ENCODE measurements at regions of chr18 and their contacts with region 1.

Region 1: DNA sequence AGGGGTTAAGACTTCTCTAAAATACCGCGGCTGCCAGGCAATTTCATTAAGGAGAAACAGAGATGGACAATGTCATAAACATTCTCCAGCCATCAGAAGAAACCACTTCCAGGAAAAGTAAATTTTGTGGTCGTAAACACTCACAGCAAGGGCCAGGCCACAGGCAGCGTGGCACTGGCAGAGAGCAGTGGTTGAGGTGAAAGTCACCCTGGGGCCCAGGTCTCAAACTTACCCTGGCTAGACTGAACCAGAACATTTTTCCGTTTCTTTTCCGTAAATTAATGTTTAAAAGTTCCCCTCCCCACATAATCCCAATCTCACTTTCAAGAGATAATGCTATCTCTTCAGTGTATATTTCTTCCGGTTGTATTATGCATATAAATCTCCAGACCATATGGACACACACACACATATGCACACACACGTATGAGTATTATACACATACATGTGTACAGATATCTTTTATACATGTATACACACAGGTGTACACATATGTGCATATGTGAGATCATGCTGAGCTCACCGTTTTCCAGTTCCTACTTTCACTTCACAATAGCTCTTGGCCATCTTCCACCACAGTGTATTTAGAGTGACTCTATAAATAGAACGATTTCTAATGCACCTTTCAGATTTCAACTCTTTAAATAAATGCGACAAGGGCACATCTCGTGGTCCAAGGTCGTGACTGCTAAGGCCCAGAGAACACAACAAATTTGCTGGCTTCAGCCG is 90.1 kb downstream of the MALT1 start:
- DNase-seq: no peak
- H3K4me3 Mint-ChIP-seq: no peak overlapping the region
- H3K27ac Mint-ChIP-seq: no peak overlapping the region
- H3K4me1 Mint-ChIP-seq: no peaks in the 10 kb centered on the region
- H3K27me3 Mint-ChIP-seq: peaks cover 20% of the 10 kb centered on the region
- CTCF ChIP-seq: no peak

Region 2: GRCh38 chr18:58501066-58501896 is 260.1 kb before region 1 on chr18:
- CTCF ChIA-PET with region 1: interaction called, 19 read pairs
- POLR2A ChIA-PET with region 1: no interaction called
- intact Hi-C with region 1: no loop called
- DNase-seq: no peak
- H3K4me3 Mint-ChIP-seq: no peak overlapping the region
- H3K27ac Mint-ChIP-seq: no peak overlapping the region
- H3K4me1 Mint-ChIP-seq: no peaks in the 10 kb centered on the region
- H3K27me3 Mint-ChIP-seq: peaks cover 4% of the 10 kb centered on the region
- CTCF ChIP-seq: no peak

Region 3: DNA sequence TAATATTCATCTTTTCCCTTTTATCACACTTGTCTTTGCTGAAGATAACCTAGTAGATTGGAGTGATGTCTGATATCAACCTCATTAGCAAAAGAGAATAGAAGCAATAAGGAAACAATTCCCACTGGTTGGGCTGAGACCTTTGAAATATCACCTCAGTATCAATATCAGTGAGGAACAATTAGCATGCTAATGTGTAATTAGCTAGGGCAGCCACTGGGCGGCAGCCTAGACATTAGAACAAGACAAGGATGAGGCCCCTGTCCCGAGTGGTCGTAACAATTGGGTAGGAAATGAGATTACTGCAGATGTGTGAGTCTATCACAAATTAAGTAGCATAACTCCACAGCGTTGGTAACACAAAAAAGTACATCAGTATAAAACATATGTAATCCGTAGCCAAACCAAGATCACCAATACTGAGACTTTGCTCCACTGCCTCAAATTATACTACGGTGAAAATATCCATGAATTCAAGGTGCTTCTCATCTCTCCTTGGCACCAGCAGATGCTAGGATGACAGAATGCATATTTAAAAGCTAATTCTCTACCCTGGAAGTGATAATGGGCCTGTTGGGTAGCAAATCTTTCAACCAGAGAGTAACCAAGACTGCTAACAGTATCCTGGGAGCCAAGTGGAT is 231.6 kb before region 1 on chr18:
- CTCF ChIA-PET with region 1: interaction called, 217 read pairs
- POLR2A ChIA-PET with region 1: interaction called, 8 read pairs
- intact Hi-C with region 1: loop called (anchors 1 kb)
- DNase-seq: peak; percentile 70
- H3K4me3 Mint-ChIP-seq: no peak overlapping the region
- H3K27ac Mint-ChIP-seq: no peak overlapping the region
- H3K4me1 Mint-ChIP-seq: no peaks in the 10 kb centered on the region
- H3K27me3 Mint-ChIP-seq: no peaks in the 10 kb centered on the region
- CTCF ChIP-seq: peak; percentile 91

Region 4: DNA sequence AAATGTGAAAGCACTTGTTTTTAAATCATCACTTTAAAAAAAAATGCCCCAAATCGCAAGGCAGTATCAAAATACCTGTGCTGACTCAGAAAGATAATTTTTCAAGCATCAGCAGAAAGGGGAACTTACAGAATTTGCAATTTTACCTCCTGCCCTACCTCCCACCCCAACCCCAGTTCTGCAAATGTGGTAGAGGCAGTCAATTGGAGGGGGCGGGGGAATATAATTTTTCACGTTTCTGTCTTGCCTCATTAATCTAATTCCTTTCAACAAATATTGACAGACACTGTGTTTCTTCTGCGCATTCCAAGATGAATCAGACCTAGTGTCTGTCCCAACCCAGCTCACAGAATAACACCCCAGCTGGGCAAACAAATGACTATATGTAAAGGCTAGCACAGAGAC is 209.3 kb before region 1 on chr18:
- CTCF ChIA-PET with region 1: interaction called, 11 read pairs
- POLR2A ChIA-PET with region 1: no interaction called
- intact Hi-C with region 1: no loop called
- DNase-seq: peak; percentile 53
- H3K4me3 Mint-ChIP-seq: no peak overlapping the region
- H3K27ac Mint-ChIP-seq: peak overlapping the region; percentile 76
- H3K4me1 Mint-ChIP-seq: peaks cover 24% of the 10 kb centered on the region
- H3K27me3 Mint-ChIP-seq: no peaks in the 10 kb centered on the region
- CTCF ChIP-seq: no peak

Region 5: GRCh38 chr18:58624011-58624410 is 137.4 kb before region 1 on chr18:
- CTCF ChIA-PET with region 1: no interaction called
- POLR2A ChIA-PET with region 1: no interaction called
- intact Hi-C with region 1: no loop called
- DNase-seq: no peak
- H3K4me3 Mint-ChIP-seq: no peak overlapping the region
- H3K27ac Mint-ChIP-seq: no peak overlapping the region
- H3K4me1 Mint-ChIP-seq: no peaks in the 10 kb centered on the region
- H3K27me3 Mint-ChIP-seq: no peaks in the 10 kb centered on the region
- CTCF ChIP-seq: no peak

Region 6: GRCh38 chr18:58748899-58749595 is 12.4 kb before region 1 on chr18:
- CTCF ChIA-PET with region 1: interaction called, 45 read pairs
- POLR2A ChIA-PET with region 1: interaction called, 6 read pairs
- intact Hi-C with region 1: no loop called
- DNase-seq: no peak
- H3K4me3 Mint-ChIP-seq: no peak overlapping the region
- H3K27ac Mint-ChIP-seq: no peak overlapping the region
- H3K4me1 Mint-ChIP-seq: no peaks in the 10 kb centered on the region
- H3K27me3 Mint-ChIP-seq: no peaks in the 10 kb centered on the region
- CTCF ChIP-seq: no peak

Measured in MCF 10A (cell line).